Dendritic cell treated with granulocyte-macrophage colony-stimulating factor and Interleukin-4, amounts not matched to agents 40 ng/mL and 50 ng/mL, for 4 days (primary cell): ENCODE measurements at regions of chr1 and their contacts with region 1.

Region 1: GRCh38 chr1:95043141-95043980 is 29.4 kb downstream of the ALG14 start:
- H3K4me3 Mint-ChIP-seq: no peak overlapping the region
- H3K27ac Mint-ChIP-seq: no peak overlapping the region
- H3K4me1 Mint-ChIP-seq: no peaks in the 10 kb centered on the region
- H3K27me3 Mint-ChIP-seq: no peaks in the 10 kb centered on the region

Region 2: DNA sequence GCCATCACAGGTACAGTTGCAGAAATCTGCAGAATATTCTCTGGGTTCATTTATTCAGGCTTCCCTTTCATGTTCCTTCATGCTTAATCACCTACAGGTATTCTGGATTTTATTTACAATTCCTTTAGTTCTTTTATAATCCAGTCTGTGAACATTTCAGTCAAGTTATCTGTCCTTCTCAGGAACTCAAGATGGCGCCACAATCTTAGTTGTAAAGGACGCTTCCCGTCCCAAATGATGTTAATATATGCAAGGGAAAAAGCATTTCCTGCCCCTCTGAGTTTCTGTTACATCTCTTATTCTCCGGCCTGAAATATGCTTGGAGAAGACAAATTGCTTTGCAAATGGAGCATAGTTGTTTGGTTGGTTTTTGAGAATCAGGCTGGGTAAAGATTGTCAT is 521.1 kb before region 1 on chr1:
- intact Hi-C with region 1: loop called (anchors 5 kb)
- H3K4me3 Mint-ChIP-seq: no peak overlapping the region
- H3K27ac Mint-ChIP-seq: no peak overlapping the region
- H3K4me1 Mint-ChIP-seq: peaks cover 9% of the 10 kb centered on the region
- H3K27me3 Mint-ChIP-seq: peaks cover 2% of the 10 kb centered on the region

Region 3: GRCh38 chr1:94854458-94855306 is 188.7 kb before region 1 on chr1:
- intact Hi-C with region 1: loop called (anchors 1 kb)
- H3K4me3 Mint-ChIP-seq: no peak overlapping the region
- H3K27ac Mint-ChIP-seq: no peak overlapping the region
- H3K4me1 Mint-ChIP-seq: no peaks in the 10 kb centered on the region
- H3K27me3 Mint-ChIP-seq: peaks cover 21% of the 10 kb centered on the region